Caco-2 (cell line): ENCODE measurements at regions of chr4 and their contacts with region 1.

Region 1: DNA sequence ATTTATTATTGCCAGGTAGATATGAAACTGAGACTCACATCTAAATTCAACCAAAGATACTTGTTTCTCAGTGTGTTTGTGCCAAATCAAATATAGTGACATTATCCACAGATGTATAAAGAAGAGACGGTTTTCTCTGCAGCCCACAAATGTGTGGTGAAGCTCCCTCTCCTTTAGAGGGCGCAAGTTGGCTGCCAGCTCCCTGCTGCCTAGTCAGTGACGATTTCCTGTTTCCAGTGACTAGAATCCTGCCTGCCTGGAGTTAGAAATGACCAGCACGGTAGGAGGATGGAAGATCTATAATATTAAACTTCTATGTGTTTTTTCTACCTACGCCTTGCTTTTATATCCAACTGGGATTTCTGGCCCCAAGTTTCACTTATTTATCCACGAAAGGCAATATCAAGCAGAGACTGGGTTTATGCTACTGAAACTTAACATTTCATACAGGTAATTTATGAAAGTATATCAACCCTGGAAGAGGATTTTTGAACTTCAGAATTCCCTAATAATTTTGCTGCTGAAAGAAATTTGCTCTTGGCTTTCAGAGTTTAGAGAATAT is 1793.7 kb upstream of the TENM3 start:
- DNase-seq: peak; percentile 37 to 51
- H3K4me3 ChIP-seq: no peak overlapping the region
- H3K4me3 Mint-ChIP-seq: no peak overlapping the region
- H3K27ac Mint-ChIP-seq: no peak overlapping the region
- H3K4me1 ChIP-seq: no peaks in the 10 kb centered on the region
- H3K4me1 Mint-ChIP-seq: no peaks in the 10 kb centered on the region
- H3K27me3 ChIP-seq: no peaks in the 10 kb centered on the region
- H3K27me3 Mint-ChIP-seq: no peaks in the 10 kb centered on the region
- CTCF ChIP-seq: peak; percentile 47 to 54

Region 2: DNA sequence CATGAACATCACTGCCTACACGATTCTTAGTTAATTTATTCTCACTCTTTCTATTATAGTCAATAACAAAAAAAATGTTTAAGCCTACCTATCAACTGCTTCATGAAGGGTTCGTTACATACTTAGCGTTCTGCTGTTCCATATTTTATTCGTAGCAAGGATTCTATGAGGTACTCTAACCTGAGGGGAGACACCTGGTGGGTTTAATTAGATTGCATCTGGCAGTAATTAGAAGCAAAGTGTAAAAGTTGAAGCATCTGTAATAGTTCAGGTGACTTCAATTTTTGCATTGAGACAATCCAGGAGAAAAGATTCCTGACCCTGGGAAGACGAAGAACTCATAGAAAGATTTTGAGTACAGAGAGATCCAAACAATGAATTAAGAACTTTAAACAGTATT is 137.9 kb after region 1 on chr4:
- CTCF ChIA-PET with region 1: no interaction called
- POLR2A ChIA-PET with region 1: no interaction called
- intact Hi-C with region 1: loop called (anchors 1 kb)
- DNase-seq: no peak
- H3K4me3 ChIP-seq: no peak overlapping the region
- H3K4me3 Mint-ChIP-seq: no peak overlapping the region
- H3K27ac Mint-ChIP-seq: no peak overlapping the region
- H3K4me1 ChIP-seq: no peaks in the 10 kb centered on the region
- H3K4me1 Mint-ChIP-seq: no peaks in the 10 kb centered on the region
- H3K27me3 ChIP-seq: no peaks in the 10 kb centered on the region
- H3K27me3 Mint-ChIP-seq: peaks cover 2% of the 10 kb centered on the region
- CTCF ChIP-seq: no peak

Region 3: GRCh38 chr4:180598281-180598680 is 148.8 kb after region 1 on chr4:
- CTCF ChIA-PET with region 1: no interaction called
- POLR2A ChIA-PET with region 1: interaction called, 18 read pairs
- intact Hi-C with region 1: no loop called
- DNase-seq: no peak
- H3K4me3 ChIP-seq: no peak overlapping the region
- H3K4me3 Mint-ChIP-seq: no peak overlapping the region
- H3K27ac Mint-ChIP-seq: no peak overlapping the region
- H3K4me1 ChIP-seq: no peaks in the 10 kb centered on the region
- H3K4me1 Mint-ChIP-seq: no peaks in the 10 kb centered on the region
- H3K27me3 ChIP-seq: no peaks in the 10 kb centered on the region
- H3K27me3 Mint-ChIP-seq: peaks cover 2% of the 10 kb centered on the region
- CTCF ChIP-seq: no peak

Region 4: DNA sequence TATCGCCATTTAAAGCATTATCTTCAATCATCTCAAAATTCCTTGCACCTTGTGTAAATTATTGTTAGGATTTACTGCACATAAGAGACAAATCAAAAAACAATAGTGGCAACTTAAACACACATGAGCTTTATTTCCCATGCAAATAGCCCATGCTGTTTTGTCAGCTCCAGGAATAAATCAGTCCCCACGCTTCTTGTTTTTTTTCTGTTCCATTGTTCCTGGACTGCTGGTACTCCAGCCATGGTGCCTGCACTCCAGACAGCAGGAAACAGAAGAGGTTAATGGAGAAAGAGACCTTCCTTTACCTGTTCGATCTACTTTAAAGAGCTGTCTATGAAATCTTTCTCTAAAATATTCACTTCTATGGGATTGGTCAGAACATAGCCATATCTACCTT is 278.0 kb after region 1 on chr4:
- CTCF ChIA-PET with region 1: no interaction called
- POLR2A ChIA-PET with region 1: no interaction called
- intact Hi-C with region 1: no loop called
- DNase-seq: no peak
- H3K4me3 ChIP-seq: no peak overlapping the region
- H3K4me3 Mint-ChIP-seq: no peak overlapping the region
- H3K27ac Mint-ChIP-seq: no peak overlapping the region
- H3K4me1 ChIP-seq: no peaks in the 10 kb centered on the region
- H3K4me1 Mint-ChIP-seq: no peaks in the 10 kb centered on the region
- H3K27me3 ChIP-seq: no peaks in the 10 kb centered on the region
- H3K27me3 Mint-ChIP-seq: no peaks in the 10 kb centered on the region
- CTCF ChIP-seq: no peak